ENCODE measurements at regions of chr6 and their contacts with region 1.

Region 1: GRCh38 chr6:163338671-163339405 is 75.7 kb upstream of the QKI start:
- DNase-seq: peak in 1 of 2 donors; percentile 72
- ATAC-seq: peak; percentile 40 to 77 (median 64)
- H3K4me3 ChIP-seq: peak overlapping the region in 1 of 10 donors; percentile 5
- H3K27ac ChIP-seq: peak overlapping the region; percentile 71 to 98 (median 86)
- H3K4me1 ChIP-seq: peaks cover 28 to 88% (median 58%) of the 10 kb centered on the region in 9 donors
- H3K27me3 ChIP-seq: no peaks in the 10 kb centered on the region
- CTCF ChIP-seq: no peak

Region 2: GRCh38 chr6:164085091-164086075 is 746.5 kb after region 1 on chr6:
- intact Hi-C with region 1: loop called in 1 of 10 experiments (anchors 10 kb)
- DNase-seq: peak; percentile 81 to 85
- ATAC-seq: peak; percentile 90 to 97 (median 95)
- H3K4me3 ChIP-seq: peak overlapping the region in 5 of 10 donors; percentile 16 to 42 (median 24)
- H3K27ac ChIP-seq: peak overlapping the region; percentile 86 to 93 (median 92)
- H3K4me1 ChIP-seq: peaks cover 9 to 27% (median 20%) of the 10 kb centered on the region in 9 donors
- H3K27me3 ChIP-seq: no peaks in the 10 kb centered on the region
- CTCF ChIP-seq: no peak

Measured in heart right ventricle (tissue), 16 donors.